Common myeloid progenitor, CD34-positive (primary cell): ENCODE measurements at regions of chr19 and their contacts with region 1.

Region 1: GRCh38 chr19:42386974-42387707 is 3.0 kb downstream of the CNFN start:
- DNase-seq: peak; percentile 62 to 73 (median 67)
- H3K4me3 ChIP-seq: peak overlapping the region; percentile 24 to 78 (median 46)
- H3K27ac ChIP-seq: no peak overlapping the region
- H3K4me1 ChIP-seq: peaks cover 0 to 8% (median 5%) of the 10 kb centered on the region in 4 experiments
- H3K27me3 ChIP-seq: peaks cover 0 to 31% (median 12%) of the 10 kb centered on the region in 5 experiments

Region 2: GRCh38 chr19:42335374-42335936 is 51.7 kb before region 1 on chr19:
- CTCF ChIA-PET with region 1: no interaction called
- POLR2A ChIA-PET with region 1: no interaction called
- DNase-seq: no peak
- H3K4me3 ChIP-seq: no peak overlapping the region
- H3K27ac ChIP-seq: no peak overlapping the region
- H3K4me1 ChIP-seq: no peaks in the 10 kb centered on the region
- H3K27me3 ChIP-seq: no peaks in the 10 kb centered on the region

Region 3: DNA sequence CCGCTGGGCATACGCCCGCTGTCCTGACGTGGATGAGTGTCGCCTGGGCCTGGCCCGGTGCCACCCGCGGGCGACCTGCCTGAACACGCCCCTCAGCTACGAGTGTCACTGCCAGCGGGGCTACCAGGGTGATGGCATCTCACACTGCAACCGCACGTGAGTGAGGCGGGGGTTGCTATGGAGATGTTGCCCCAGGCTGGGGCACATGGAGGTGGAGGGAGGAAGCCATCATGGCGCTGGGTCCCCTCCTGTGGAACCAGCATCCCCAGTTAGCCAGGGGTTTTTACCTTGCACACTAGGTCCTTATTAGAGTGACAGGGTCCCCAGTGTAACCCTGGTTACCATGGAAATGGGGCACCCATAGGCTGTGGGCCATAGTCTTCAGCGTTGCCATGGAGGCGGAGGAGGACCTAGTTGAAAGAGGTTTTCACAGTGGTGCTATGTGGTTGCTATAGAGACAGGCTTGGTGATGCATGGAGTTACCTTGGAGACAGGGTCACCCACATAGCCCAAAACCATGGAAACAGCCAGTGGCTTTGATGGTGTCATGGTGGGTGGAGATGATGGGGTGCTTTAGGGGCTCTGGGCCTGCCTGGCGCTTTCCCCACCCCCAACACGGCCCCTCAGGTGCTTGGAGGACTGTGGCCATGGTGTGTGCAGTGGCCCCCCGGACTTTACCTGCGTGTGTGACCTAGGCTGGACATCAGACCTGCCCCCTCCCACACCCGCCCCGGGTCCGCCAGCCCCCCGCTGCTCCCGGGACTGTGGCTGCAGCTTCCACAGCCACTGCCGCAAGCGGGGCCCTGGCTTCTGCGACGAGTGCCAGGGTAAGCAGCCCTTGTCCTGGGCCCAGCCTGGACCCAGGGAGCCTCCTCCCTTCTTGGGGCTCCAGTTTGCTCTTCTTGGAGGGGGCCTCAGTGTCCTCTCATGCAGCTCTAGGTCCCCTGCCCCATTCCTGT is 34.6 kb before region 1 on chr19:
- CTCF ChIA-PET with region 1: no interaction called
- POLR2A ChIA-PET with region 1: no interaction called
- DNase-seq: peak in 2 of 3 donors; percentile 13 to 35
- H3K4me3 ChIP-seq: no peak overlapping the region
- H3K27ac ChIP-seq: no peak overlapping the region
- H3K4me1 ChIP-seq: no peaks in the 10 kb centered on the region
- H3K27me3 ChIP-seq: no peaks in the 10 kb centered on the region

Region 4: DNA sequence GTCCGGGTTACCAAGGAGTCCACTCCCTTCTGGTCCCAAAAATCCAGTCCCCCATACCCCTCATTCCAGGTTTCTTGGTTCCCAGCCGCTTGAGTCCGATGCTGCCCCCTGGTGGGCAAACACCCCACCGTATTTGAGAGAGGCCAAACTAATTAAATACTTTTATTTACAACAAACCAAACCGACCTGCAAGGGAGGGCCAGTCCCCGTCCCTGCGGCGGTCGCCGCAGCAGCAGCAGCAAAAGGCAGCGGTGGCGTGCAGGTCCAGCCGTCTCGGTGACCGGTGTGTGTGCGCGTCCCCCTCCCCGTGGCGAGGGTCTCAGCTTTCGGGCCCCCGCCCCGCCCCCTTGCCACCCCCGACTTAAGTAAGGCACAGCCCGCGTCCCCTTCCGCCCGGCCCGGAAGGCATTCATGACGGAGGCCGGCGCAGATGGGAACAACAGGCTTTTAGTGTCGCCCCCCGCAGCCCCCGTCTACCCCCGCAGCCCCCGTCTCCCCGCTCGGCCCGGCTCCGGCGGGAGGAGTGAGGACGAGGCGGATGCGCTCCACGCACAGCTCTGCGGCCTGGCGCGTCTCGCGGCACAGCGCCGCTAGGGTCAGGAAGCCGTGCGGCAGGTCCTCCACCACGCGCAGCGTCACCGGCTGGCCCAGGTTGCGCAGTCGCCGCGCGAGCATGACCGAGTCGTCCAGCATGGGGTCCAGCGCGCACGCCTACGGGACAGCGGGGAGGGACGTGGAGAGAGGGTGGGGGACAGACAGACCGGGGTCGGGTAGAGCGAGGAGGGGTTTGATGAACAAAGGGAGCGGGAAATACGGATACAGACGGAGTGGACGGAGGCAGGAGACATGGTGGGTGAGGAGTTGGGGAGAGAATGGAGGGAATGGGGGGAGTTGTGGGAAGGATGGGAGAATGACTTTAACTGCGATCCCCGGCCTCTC is 14.5 kb after region 1 on chr19:
- CTCF ChIA-PET with region 1: interaction called, 16 read pairs
- POLR2A ChIA-PET with region 1: interaction called, 3 read pairs
- DNase-seq: peak; percentile 81 to 91 (median 86)
- H3K4me3 ChIP-seq: peak overlapping the region; percentile 12 to 88 (median 65)
- H3K27ac ChIP-seq: no peak overlapping the region
- H3K4me1 ChIP-seq: peaks cover 0 to 30% (median 22%) of the 10 kb centered on the region in 4 experiments
- H3K27me3 ChIP-seq: no peaks in the 10 kb centered on the region